Motor neuron (in vitro differentiated cells): ENCODE measurements at regions of chr18 and their contacts with region 1.

Region 1: DNA sequence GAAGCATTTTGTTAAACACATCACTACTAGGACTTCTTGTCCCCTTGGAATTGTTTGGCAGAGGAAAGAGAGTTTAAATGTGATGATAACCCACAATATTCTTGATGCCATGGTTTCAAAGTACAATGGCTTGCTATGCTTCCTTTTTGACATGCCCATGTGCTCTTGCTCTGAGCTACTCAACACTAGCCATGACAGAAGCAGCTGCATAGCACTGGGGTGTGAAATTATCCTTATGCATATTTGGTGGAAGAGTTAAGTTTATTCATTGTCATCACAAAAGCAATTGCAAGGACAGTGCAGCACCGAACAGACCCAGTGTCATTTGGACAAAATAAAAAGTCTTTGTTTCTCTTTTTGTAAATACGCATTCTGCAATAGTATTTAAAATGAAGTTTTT is 209.9 kb upstream of the CDH20 start:
- ATAC-seq: peak in 1 of 8 experiments; percentile 70
- H3K4me3 ChIP-seq: no peak overlapping the region
- H3K27ac ChIP-seq: no peak overlapping the region
- H3K4me1 ChIP-seq: peaks cover 15 to 16% of the 10 kb centered on the region in 2 donors

Region 2: GRCh38 chr18:60935041-60935910 is 188.0 kb before region 1 on chr18:
- in situ Hi-C with region 1: no loop called
- ATAC-seq: no peak
- H3K4me3 ChIP-seq: no peak overlapping the region
- H3K27ac ChIP-seq: no peak overlapping the region
- H3K4me1 ChIP-seq: no peaks in the 10 kb centered on the region

Region 3: GRCh38 chr18:61001138-61001537 is 122.2 kb before region 1 on chr18:
- in situ Hi-C with region 1: loop called in 1 of 9 experiments (anchors 25 kb)
- ATAC-seq: no peak
- H3K4me3 ChIP-seq: no peak overlapping the region
- H3K27ac ChIP-seq: no peak overlapping the region
- H3K4me1 ChIP-seq: no peaks in the 10 kb centered on the region

Region 4: GRCh38 chr18:61047794-61048193 is 75.5 kb before region 1 on chr18:
- in situ Hi-C with region 1: no loop called
- ATAC-seq: no peak
- H3K4me3 ChIP-seq: no peak overlapping the region
- H3K27ac ChIP-seq: no peak overlapping the region
- H3K4me1 ChIP-seq: no peaks in the 10 kb centered on the region

Region 5: GRCh38 chr18:61209801-61210200 is 86.5 kb after region 1 on chr18:
- in situ Hi-C with region 1: loop called in 1 of 9 experiments (anchors 25 kb)
- ATAC-seq: no peak
- H3K4me3 ChIP-seq: no peak overlapping the region
- H3K27ac ChIP-seq: no peak overlapping the region
- H3K4me1 ChIP-seq: no peaks in the 10 kb centered on the region